Panc1 (cell line): ENCODE measurements at regions of chr15 and their contacts with region 1.

Region 1: GRCh38 chr15:29269485-29270168 is at the start of gene NSMCE3:
- DNase-seq: peak; percentile 48
- ATAC-seq: peak; percentile 99
- H3K4me3 ChIP-seq: peak within 1 kb of the TSS; percentile 67 to 94
- H3K27ac ChIP-seq: peak within 1 kb of the TSS; percentile 94
- H3K4me1 ChIP-seq: peaks cover 18% of the 10 kb centered on the region
- H3K27me3 ChIP-seq: no peaks in the 10 kb centered on the region
- CTCF ChIP-seq: no peak
- total RNA-seq, gene NSMCE3: 5.5 TPM

Region 2: GRCh38 chr15:29364429-29365078 is 94.9 kb after region 1 on chr15:
- CTCF ChIA-PET with region 1: no interaction called
- POLR2A ChIA-PET with region 1: no interaction called
- in situ Hi-C with region 1: no loop called
- intact Hi-C with region 1: no loop called
- DNase-seq: no peak
- ATAC-seq: peak; percentile 80
- H3K4me3 ChIP-seq: no peak overlapping the region
- H3K27ac ChIP-seq: no peak overlapping the region
- H3K4me1 ChIP-seq: no peaks in the 10 kb centered on the region
- H3K27me3 ChIP-seq: no peaks in the 10 kb centered on the region; the same call in none of the 2 replicates
- CTCF ChIP-seq: peak; percentile 53

Region 3: DNA sequence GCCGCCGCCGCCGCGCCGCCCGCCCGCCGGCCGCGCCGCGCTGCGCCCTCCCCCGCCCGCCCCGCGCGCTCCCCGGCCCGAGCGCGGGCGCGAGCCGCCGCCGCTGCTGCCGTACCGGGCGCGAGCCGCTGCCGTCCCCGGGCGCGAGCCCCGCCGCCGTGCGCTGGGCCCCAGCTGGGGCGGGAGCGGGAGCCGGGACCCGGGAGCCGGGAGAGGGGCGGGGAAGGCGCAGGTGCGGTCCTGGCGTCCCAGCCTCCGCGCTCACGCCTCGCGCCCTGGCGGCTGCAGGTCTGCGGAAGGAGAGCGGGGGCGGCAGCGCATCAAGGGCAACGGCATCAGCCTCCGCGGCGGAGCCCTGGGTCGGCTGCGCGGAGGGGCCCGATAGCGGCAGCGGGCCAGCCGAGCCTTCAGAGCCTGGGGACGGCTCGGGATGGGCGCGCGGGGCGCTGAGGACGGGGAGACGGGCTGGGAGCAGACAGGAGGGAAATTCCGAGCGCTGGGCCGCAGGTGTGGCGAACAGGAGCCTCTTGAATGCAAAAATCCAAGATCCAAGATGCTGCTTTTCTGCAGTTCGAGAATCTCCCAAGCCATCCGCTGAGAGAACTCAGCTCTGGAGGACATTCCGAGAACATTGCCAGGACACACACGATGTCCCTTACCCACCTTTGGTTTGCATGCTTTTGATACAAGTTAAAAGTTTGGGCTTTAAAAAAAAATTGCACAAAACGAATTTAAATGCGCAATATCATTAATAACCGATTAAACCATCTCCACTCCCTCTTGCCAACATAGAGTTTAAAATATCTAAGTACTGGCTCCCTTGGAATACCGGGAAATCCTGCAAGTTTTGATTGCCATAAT is 301.5 kb after region 1 on chr15:
- CTCF ChIA-PET with region 1: no interaction called
- POLR2A ChIA-PET with region 1: no interaction called
- in situ Hi-C with region 1: no loop called
- intact Hi-C with region 1: loop called (anchors 10 kb)
- DNase-seq: no peak
- ATAC-seq: peak; percentile 68
- H3K4me3 ChIP-seq: peak overlapping the region; percentile 26 to 33
- H3K27ac ChIP-seq: no peak overlapping the region
- H3K4me1 ChIP-seq: peaks cover 8% of the 10 kb centered on the region
- H3K27me3 ChIP-seq: peaks cover 42% of the 10 kb centered on the region
- CTCF ChIP-seq: no peak